HEK293 (cell line): ENCODE measurements at regions of chr6 and their contacts with region 1.

Region 1: GRCh38 chr6:53484476-53485280 is 60.2 kb downstream of the GCLC start:
- H3K4me3 ChIP-seq: no peak overlapping the region
- H3K27ac ChIP-seq: no peak overlapping the region
- H3K4me1 ChIP-seq: peaks cover 6% of the 10 kb centered on the region; the same call in 1 of the 2 replicates
- CTCF ChIP-seq: peak; percentile 70; the same call in 1 of the 2 replicates

Region 2: GRCh38 chr6:53151676-53152075 is 333.0 kb before region 1 on chr6:
- CTCF ChIA-PET with region 1: interaction called, 10 read pairs
- POLR2A ChIA-PET with region 1: no interaction called
- H3K4me3 ChIP-seq: no peak overlapping the region
- H3K27ac ChIP-seq: no peak overlapping the region
- H3K4me1 ChIP-seq: no peaks in the 10 kb centered on the region
- CTCF ChIP-seq: no peak

Region 3: GRCh38 chr6:53458105-53458866 is 26.4 kb before region 1 on chr6:
- CTCF ChIA-PET with region 1: interaction called, 10 read pairs
- POLR2A ChIA-PET with region 1: no interaction called
- H3K4me3 ChIP-seq: no peak overlapping the region
- H3K27ac ChIP-seq: no peak overlapping the region
- H3K4me1 ChIP-seq: no peaks in the 10 kb centered on the region
- CTCF ChIP-seq: no peak